Activated naive CD8-positive, alpha-beta T cell treated with anti-CD3 and anti-CD28 coated beads, Interleukin-2, amount 10 ng/mL, durations not matched to agents 7 days and 5 days (primary cell): ENCODE measurements at regions of chr22 and their contacts with region 1.

Region 1: DNA sequence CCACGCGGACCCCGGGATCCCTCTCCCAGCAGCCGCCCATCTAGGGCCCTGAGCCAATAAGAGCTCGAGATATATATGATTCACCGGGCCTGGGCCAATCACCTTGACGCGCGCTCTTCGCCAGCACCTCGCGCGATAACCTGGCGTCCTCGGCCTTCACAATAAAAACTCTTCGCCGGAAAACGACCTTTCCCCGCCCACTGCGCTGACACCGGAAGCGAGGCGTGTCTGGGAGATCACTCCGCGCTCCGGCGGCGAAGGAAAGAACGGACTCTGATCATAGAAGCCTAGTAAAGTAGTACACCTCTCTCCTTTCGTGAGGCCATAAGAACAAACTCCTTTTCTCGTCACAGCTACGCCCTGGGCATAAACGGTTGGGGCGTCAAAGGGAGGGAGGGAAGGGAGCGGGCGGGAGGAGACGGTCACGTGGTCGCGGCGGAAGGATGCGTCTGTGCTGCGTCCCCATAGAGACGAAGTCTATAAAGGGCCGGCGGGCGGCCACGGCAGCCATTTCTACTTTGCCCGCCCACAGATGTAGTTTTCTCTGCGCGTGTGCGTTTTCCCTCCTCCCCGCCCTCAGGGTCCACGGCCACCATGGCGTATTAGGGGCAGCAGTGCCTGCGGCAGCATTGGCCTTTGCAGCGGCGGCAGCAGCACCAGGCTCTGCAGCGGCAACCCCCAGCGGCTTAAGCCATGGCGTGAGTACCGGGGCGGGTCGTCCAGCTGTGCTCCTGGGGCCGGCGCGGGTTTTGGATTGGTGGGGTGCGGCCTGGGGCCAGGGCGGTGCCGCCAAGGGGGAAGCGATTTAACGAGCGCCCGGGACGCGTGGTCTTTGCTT is at the start of gene ATF4:
- DNase-seq: peak; percentile 92
- ATAC-seq: peak; percentile 94
- H3K4me3 Mint-ChIP-seq: peak within 1 kb of the TSS; percentile 96
- H3K27ac Mint-ChIP-seq: peak within 1 kb of the TSS; percentile 99
- H3K4me1 Mint-ChIP-seq: peaks cover 58% of the 10 kb centered on the region
- H3K27me3 Mint-ChIP-seq: no peaks in the 10 kb centered on the region
- total RNA-seq, gene ATF4: 413 to 424 TPM

Region 2: GRCh38 chr22:39360674-39361413 is 159.4 kb before region 1 on chr22:
- POLR2A ChIA-PET with region 1: no interaction called
- DNase-seq: no peak
- ATAC-seq: no peak
- H3K4me3 Mint-ChIP-seq: no peak overlapping the region
- H3K27ac Mint-ChIP-seq: no peak overlapping the region
- H3K4me1 Mint-ChIP-seq: peaks cover 3% of the 10 kb centered on the region
- H3K27me3 Mint-ChIP-seq: no peaks in the 10 kb centered on the region

Region 3: GRCh38 chr22:39395936-39396796 is 124.1 kb before region 1 on chr22:
- POLR2A ChIA-PET with region 1: interaction called, 12 read pairs
- DNase-seq: no peak
- ATAC-seq: no peak
- H3K4me3 Mint-ChIP-seq: no peak overlapping the region
- H3K27ac Mint-ChIP-seq: no peak overlapping the region
- H3K4me1 Mint-ChIP-seq: peaks cover 5% of the 10 kb centered on the region
- H3K27me3 Mint-ChIP-seq: no peaks in the 10 kb centered on the region

Region 4: DNA sequence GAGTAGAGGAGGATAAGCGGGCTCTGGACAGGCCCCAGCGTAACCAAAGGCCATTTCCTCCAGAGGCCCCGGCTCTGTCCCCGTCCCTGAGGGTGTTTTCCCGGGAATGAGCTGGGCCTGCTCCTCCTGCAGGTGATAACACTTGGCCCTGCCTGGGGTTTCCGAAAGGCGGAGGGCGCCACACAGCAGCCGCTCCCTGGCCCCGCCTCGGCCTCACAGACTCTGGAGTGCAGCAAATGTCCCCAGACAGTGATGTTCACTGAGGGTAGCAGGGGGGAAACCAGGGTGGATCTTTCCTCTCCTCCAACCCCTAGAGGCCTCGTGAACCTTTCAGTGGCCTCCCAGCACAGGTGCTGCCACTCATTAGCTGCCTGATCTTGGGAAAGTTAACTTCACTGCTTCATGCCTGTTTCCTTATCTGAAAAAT is 74.0 kb before region 1 on chr22:
- POLR2A ChIA-PET with region 1: interaction called, 11 read pairs
- DNase-seq: peak; percentile 50
- ATAC-seq: peak; percentile 31
- H3K4me3 Mint-ChIP-seq: peak overlapping the region; percentile 86
- H3K27ac Mint-ChIP-seq: peak overlapping the region; percentile 98
- H3K4me1 Mint-ChIP-seq: peaks cover 42% of the 10 kb centered on the region
- H3K27me3 Mint-ChIP-seq: no peaks in the 10 kb centered on the region

Region 5: DNA sequence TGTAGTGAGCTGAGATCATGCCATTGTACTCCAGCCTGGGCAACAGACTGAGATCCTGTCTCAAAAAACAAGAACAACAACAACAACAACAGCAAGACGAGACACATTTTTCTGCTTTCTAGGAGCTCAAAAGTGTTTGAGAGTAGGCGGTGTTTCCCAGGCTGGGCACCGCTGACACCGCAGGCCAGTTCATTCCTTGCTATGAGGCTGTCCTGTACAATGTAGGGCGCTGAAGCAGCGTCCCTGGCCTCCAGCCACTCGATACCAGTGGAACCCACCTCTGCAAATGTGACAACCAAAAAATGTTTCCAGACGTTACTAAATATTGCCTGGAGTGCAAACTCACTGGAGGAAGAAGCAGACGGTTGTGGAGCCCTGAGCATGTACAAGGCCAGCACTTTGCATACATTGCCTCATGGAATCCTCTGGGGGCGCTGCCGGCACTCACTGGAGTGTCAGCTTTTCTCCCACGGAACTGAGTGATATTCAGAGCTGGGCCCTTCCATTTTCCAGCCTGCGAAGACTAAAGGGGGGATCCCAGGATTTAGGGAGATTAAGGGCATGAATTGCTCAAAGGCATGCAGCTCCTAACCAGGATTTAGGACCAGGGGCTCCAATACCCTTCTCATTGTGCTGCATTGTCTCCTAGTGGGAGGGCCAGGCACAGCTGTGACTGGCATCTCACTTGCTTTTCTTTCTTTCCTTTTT is 24.0 kb before region 1 on chr22:
- POLR2A ChIA-PET with region 1: interaction called, 59 read pairs
- DNase-seq: peak; percentile 64
- ATAC-seq: peak; percentile 64
- H3K4me3 Mint-ChIP-seq: no peak overlapping the region
- H3K27ac Mint-ChIP-seq: no peak overlapping the region
- H3K4me1 Mint-ChIP-seq: peaks cover 16% of the 10 kb centered on the region
- H3K27me3 Mint-ChIP-seq: peaks cover 4% of the 10 kb centered on the region

Region 6: GRCh38 chr22:39532215-39533071 is 12.2 kb after region 1 on chr22 and contains the start of gene RPS19BP1:
- POLR2A ChIA-PET with region 1: interaction called, 80 read pairs
- DNase-seq: peak; percentile 97
- ATAC-seq: peak; percentile 85
- H3K4me3 Mint-ChIP-seq: peak within 1 kb of the TSS; percentile 93
- H3K27ac Mint-ChIP-seq: peak within 1 kb of the TSS; percentile 97
- H3K4me1 Mint-ChIP-seq: peaks cover 43% of the 10 kb centered on the region
- H3K27me3 Mint-ChIP-seq: no peaks in the 10 kb centered on the region
- total RNA-seq, gene RPS19BP1: 66.5 to 71.4 TPM